ENCODE measurements at regions of chr16 and their contacts with region 1.

Region 1: DNA sequence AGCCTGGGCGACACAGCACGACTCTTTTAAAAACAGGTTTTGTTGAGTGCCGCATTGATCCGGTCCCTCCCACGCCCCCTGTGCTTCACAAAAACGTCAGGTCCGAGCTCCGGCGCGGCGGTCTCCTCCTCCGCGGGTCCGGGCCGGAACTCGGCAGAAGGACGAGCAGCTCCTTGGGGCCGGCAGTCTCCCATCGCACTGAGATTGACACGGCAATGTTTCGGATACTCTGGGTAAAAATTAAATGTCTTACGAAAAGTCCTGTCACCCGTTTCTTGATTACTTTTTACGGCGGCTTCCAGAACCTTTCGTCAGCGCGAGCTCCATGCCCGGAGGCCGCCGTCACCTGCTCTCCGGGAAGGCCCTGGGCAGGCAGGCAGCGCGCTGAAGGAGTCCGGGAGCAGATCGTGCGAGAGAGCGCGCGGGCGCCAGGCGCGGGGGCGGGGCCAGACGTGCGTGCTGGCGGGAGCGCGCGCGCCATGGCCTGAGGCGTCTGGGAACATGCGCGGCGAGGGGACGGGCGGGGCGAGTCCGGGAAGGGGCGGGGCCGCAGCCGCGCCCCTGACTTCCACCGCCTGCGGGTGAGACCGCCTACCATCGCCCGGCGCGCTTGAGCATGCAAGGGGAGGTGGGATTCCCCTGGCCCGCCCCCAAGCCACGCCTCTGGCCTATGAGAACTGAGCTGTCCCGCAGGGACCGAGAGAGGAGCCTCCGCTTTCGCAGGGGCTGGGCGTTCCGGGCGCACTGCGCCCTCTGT is 11.7 kb upstream of the SRL start:
- DNase-seq: peak; percentile 89
- ATAC-seq: peak; percentile 99
- H3K4me3 ChIP-seq: peak overlapping the region; percentile 62 to 67
- H3K27ac ChIP-seq: peak overlapping the region; percentile 87
- H3K4me1 ChIP-seq: no peaks in the 10 kb centered on the region
- H3K27me3 ChIP-seq: no peaks in the 10 kb centered on the region
- CTCF ChIP-seq: no peak

Region 2: DNA sequence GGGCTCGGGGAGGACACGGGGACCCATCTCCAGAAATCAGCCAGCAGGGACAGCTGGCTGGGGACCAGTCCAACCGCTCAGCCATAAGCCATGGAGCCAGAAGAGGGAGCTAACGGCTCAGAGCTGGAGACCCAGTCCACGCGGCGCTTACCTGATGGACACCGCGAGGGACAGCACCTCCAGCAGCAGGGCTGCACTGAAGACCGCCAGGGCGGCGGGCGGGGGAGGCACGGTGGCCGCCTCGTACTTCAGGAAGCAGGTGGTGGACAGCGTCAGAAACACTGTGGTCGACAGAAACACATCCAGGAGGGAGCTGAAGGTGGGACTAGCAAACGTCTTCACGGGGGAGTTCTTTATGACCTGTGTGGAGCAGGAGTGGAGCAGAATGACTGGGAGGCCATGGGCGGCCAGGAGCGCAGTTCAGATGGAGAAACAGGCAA is 270.5 kb before region 1 on chr16:
- CTCF ChIA-PET with region 1: interaction called, 19 read pairs
- POLR2A ChIA-PET with region 1: interaction called, 3 read pairs
- in situ Hi-C with region 1: no loop called
- intact Hi-C with region 1: loop called (anchors 5 kb)
- DNase-seq: no peak
- ATAC-seq: peak; percentile 94
- H3K4me3 ChIP-seq: no peak overlapping the region
- H3K27ac ChIP-seq: peak overlapping the region; percentile 50; the same call in 1 of the 2 replicates
- H3K4me1 ChIP-seq: peaks cover 3% of the 10 kb centered on the region; the same call in 1 of the 2 replicates
- H3K27me3 ChIP-seq: no peaks in the 10 kb centered on the region
- CTCF ChIP-seq: peak; percentile 93

Region 3: GRCh38 chr16:4111748-4112696 is 141.6 kb before region 1 on chr16:
- CTCF ChIA-PET with region 1: interaction called, 5 read pairs
- POLR2A ChIA-PET with region 1: no interaction called
- in situ Hi-C with region 1: no loop called
- intact Hi-C with region 1: loop called (anchors 5 kb)
- DNase-seq: no peak
- ATAC-seq: no peak
- H3K4me3 ChIP-seq: peak overlapping the region; percentile 50 to 61
- H3K27ac ChIP-seq: peak overlapping the region; percentile 94
- H3K4me1 ChIP-seq: peaks cover 37% of the 10 kb centered on the region
- H3K27me3 ChIP-seq: no peaks in the 10 kb centered on the region
- CTCF ChIP-seq: no peak

Region 4: GRCh38 chr16:4200000-4200780 is 53.4 kb before region 1 on chr16:
- CTCF ChIA-PET with region 1: interaction called, 8 read pairs
- POLR2A ChIA-PET with region 1: no interaction called
- in situ Hi-C with region 1: no loop called
- intact Hi-C with region 1: loop called (anchors 5 kb)
- DNase-seq: no peak
- ATAC-seq: peak; percentile 93
- H3K4me3 ChIP-seq: no peak overlapping the region
- H3K27ac ChIP-seq: no peak overlapping the region
- H3K4me1 ChIP-seq: peaks cover 5% of the 10 kb centered on the region; the same call in 1 of the 2 replicates
- H3K27me3 ChIP-seq: no peaks in the 10 kb centered on the region
- CTCF ChIP-seq: no peak; the same call in 1 of the 2 replicates